HEK293 (cell line): ENCODE measurements at regions of chr7 and their contacts with region 1.

Region 1: DNA sequence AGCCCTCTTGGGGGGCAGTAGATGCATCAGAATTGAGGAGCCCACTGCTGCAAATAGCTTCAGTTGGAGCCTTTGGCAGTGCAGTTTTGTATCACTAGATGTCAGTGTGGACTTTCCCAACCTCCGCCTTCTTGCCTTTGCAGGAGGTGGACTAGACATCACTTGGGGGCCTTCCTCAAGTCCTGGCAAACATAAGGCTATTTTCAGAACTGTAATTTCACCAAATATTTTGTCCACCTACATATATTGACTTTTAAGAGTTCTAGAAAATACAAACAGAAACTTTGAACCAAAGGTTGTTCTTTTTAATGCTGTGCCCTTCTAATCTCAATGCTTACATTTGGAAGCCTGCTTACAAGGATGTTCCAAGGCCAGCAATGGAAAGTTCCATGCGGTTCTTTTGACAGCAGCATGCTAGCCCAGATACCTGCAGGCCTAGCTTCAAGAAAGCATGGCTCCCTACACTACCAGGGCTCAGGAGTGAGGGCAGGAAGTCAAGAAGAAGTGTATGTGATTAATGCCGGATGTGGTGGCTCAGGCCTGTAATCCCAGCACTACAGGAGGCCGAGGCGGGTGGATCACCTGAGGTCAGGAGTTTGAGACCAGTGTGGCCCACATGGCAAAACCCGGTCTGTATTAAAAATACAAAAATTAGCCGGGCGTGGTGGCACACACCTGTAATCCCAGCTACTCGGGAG is 8.0 kb upstream of the ZNRF2 start:
- H3K4me3 ChIP-seq: no peak overlapping the region
- H3K27ac ChIP-seq: no peak overlapping the region
- H3K4me1 ChIP-seq: no peaks in the 10 kb centered on the region
- CTCF ChIP-seq: peak; percentile 60

Region 2: GRCh38 chr7:28378574-28379149 is 1897.7 kb before region 1 on chr7:
- CTCF ChIA-PET with region 1: no interaction called
- POLR2A ChIA-PET with region 1: no interaction called
- H3K4me3 ChIP-seq: no peak overlapping the region
- H3K27ac ChIP-seq: no peak overlapping the region
- H3K4me1 ChIP-seq: no peaks in the 10 kb centered on the region
- CTCF ChIP-seq: no peak

Region 3: DNA sequence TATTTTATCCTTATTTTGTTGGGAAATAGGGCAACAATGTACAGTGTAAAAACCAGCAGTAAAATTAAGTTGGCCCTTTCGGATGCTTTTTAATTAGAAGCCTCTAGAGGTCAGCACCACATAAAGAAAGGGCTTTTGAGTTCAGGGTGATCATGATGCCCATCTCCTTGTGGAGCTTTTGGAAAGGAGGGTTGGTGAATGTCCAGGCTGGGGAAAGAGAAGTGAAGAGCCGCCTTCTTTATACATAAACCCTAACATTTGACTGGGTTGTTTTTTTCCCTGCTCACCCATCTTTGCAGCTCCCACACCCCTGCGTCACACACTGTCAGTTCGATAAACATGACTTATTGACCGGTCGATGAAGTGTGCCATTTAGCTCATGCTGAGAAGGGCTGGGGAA is 111.8 kb before region 1 on chr7:
- CTCF ChIA-PET with region 1: interaction called, 10 read pairs
- POLR2A ChIA-PET with region 1: no interaction called
- H3K4me3 ChIP-seq: no peak overlapping the region
- H3K27ac ChIP-seq: no peak overlapping the region
- H3K4me1 ChIP-seq: peaks cover 17% of the 10 kb centered on the region
- CTCF ChIP-seq: no peak

Region 4: DNA sequence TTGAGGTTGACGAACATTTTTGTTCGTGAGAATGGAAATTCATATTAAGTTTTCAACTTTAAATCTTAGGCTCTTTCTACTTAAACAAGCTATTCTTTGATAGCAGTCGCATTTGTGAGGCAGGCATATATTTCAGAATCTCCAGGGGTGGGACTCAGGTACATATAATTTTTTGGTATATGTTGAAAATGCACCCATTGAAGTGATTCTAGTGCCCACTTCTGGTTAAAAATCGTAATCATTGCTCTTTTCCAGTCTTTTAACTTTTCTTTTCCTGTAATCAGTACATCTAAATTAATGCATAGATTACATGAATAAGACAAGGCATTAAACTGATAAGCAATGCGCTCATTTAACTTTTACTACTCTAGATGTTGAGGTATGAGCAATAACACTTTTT is 75.8 kb after region 1 on chr7:
- CTCF ChIA-PET with region 1: interaction called, 18 read pairs
- POLR2A ChIA-PET with region 1: no interaction called
- H3K4me3 ChIP-seq: no peak overlapping the region
- H3K27ac ChIP-seq: no peak overlapping the region
- H3K4me1 ChIP-seq: peaks cover 49% of the 10 kb centered on the region
- CTCF ChIP-seq: no peak

Region 5: GRCh38 chr7:30412810-30413504 is 136.6 kb after region 1 on chr7:
- CTCF ChIA-PET with region 1: interaction called, 31 read pairs
- POLR2A ChIA-PET with region 1: no interaction called
- H3K4me3 ChIP-seq: no peak overlapping the region
- H3K27ac ChIP-seq: no peak overlapping the region
- H3K4me1 ChIP-seq: no peaks in the 10 kb centered on the region
- CTCF ChIP-seq: 0 out of 2 replicates have a peak, but pooled peaks have one; percentile 17